Mammary epithelial cell (primary cell): ENCODE measurements at regions of chr10 and their contacts with region 1.

Region 1: DNA sequence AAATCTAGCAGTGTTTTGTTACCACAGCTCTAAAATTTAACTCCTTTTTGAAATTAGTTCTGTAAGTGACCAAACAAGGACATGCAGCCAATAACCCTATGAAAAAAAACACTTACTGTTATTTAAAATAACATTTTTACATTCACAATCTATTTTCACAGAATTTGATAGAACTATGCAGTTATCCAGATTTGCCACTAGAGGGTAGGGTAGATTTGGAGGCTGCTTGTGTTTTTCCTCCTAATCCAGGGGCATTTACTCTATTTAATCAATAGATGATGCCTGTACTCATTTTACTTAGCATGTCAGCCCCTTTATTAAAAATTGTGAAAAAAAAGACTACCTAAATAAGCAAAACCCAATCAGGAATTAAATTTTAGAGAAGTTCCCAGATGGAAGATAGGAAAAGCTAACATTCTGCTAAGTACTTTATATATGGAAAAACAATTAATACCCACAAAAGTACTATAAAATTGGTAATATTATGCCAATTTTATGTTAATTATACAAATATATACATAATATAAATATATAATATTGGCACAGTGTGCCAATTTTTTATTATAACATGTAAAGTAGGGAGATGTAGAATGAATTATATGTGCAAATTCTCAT is 18.1 kb upstream of the LIPK start:
- DNase-seq: no peak
- H3K4me3 ChIP-seq: no peak overlapping the region
- H3K27ac ChIP-seq: no peak overlapping the region
- H3K4me1 ChIP-seq: peaks cover 4% of the 10 kb centered on the region
- H3K27me3 ChIP-seq: no peaks in the 10 kb centered on the region
- CTCF ChIP-seq: peak; percentile 79 to 82

Region 2: DNA sequence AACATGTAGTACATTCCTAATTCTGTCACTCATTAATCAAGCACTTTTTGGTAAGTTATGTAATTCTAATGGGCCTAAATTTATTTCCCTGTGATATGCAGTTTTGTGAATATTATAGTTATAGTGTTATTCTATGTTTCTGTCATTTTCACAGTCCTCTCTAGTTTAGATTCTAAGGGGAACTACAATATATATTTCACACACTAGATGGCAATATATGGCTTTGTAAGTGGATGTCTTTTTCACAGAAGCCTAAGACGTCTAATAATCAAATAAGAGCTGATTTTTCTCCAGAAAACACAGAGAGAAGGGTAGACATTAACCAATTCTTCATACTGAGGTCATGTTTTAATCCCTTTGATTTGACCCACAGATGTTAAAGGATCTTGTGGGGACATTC is 122.9 kb before region 1 on chr10:
- CTCF ChIA-PET with region 1: interaction called, 6 read pairs
- dilution Hi-C with region 1: no loop called
- in situ Hi-C with region 1: no loop called
- intact Hi-C with region 1: loop called (anchors 1 kb)
- DNase-seq: peak; percentile 13
- H3K4me3 ChIP-seq: no peak overlapping the region
- H3K27ac ChIP-seq: no peak overlapping the region
- H3K4me1 ChIP-seq: no peaks in the 10 kb centered on the region
- H3K27me3 ChIP-seq: no peaks in the 10 kb centered on the region
- CTCF ChIP-seq: peak; percentile 40 to 43

Region 3: GRCh38 chr10:88721392-88721791 is 33.4 kb after region 1 on chr10:
- CTCF ChIA-PET with region 1: no interaction called
- dilution Hi-C with region 1: no loop called
- in situ Hi-C with region 1: no loop called
- intact Hi-C with region 1: no loop called
- DNase-seq: no peak
- H3K4me3 ChIP-seq: no peak overlapping the region
- H3K27ac ChIP-seq: no peak overlapping the region
- H3K4me1 ChIP-seq: no peaks in the 10 kb centered on the region
- H3K27me3 ChIP-seq: no peaks in the 10 kb centered on the region
- CTCF ChIP-seq: no peak

Region 4: GRCh38 chr10:88744002-88744401 is 56.0 kb after region 1 on chr10:
- CTCF ChIA-PET with region 1: no interaction called
- dilution Hi-C with region 1: no loop called
- in situ Hi-C with region 1: no loop called
- intact Hi-C with region 1: loop called (anchors 2 kb)
- DNase-seq: no peak
- H3K4me3 ChIP-seq: no peak overlapping the region
- H3K27ac ChIP-seq: no peak overlapping the region
- H3K4me1 ChIP-seq: no peaks in the 10 kb centered on the region
- H3K27me3 ChIP-seq: no peaks in the 10 kb centered on the region
- CTCF ChIP-seq: peak in 1 of 2 donors; percentile 45

Region 5: GRCh38 chr10:88791924-88792323 is 104.0 kb after region 1 on chr10:
- CTCF ChIA-PET with region 1: no interaction called
- dilution Hi-C with region 1: no loop called
- in situ Hi-C with region 1: no loop called
- intact Hi-C with region 1: loop called (anchors 1 kb)
- DNase-seq: peak; percentile 25
- H3K4me3 ChIP-seq: no peak overlapping the region
- H3K27ac ChIP-seq: no peak overlapping the region
- H3K4me1 ChIP-seq: peaks cover 13% of the 10 kb centered on the region
- H3K27me3 ChIP-seq: peaks cover 5% of the 10 kb centered on the region
- CTCF ChIP-seq: peak; percentile 69 to 73

Region 6: GRCh38 chr10:88810196-88810961 is 122.4 kb after region 1 on chr10:
- CTCF ChIA-PET with region 1: no interaction called
- dilution Hi-C with region 1: no loop called
- in situ Hi-C with region 1: loop called (anchors 5 to 10 kb)
- intact Hi-C with region 1: loop called (anchors 1 kb)
- DNase-seq: peak; percentile 65
- H3K4me3 ChIP-seq: no peak overlapping the region
- H3K27ac ChIP-seq: no peak overlapping the region
- H3K4me1 ChIP-seq: peaks cover 10% of the 10 kb centered on the region
- H3K27me3 ChIP-seq: no peaks in the 10 kb centered on the region
- CTCF ChIP-seq: peak; percentile 85 to 87

Region 7: GRCh38 chr10:88990384-88991160 is 302.6 kb after region 1 on chr10 and contains the start of gene FAS:
- CTCF ChIA-PET with region 1: no interaction called
- dilution Hi-C with region 1: no loop called
- in situ Hi-C with region 1: no loop called
- intact Hi-C with region 1: loop called (anchors 2 kb)
- DNase-seq: peak; percentile 96
- H3K4me3 ChIP-seq: peak within 1 kb of the TSS; percentile 87 to 94 (median 93)
- H3K27ac ChIP-seq: peak within 1 kb of the TSS; percentile 97
- H3K4me1 ChIP-seq: peaks cover 27% of the 10 kb centered on the region
- H3K27me3 ChIP-seq: no peaks in the 10 kb centered on the region
- CTCF ChIP-seq: no peak
- total RNA-seq, gene FAS: 50.0 to 71.8 TPM